ENCODE measurements at regions of chr11 and their contacts with region 1.

Region 1: DNA sequence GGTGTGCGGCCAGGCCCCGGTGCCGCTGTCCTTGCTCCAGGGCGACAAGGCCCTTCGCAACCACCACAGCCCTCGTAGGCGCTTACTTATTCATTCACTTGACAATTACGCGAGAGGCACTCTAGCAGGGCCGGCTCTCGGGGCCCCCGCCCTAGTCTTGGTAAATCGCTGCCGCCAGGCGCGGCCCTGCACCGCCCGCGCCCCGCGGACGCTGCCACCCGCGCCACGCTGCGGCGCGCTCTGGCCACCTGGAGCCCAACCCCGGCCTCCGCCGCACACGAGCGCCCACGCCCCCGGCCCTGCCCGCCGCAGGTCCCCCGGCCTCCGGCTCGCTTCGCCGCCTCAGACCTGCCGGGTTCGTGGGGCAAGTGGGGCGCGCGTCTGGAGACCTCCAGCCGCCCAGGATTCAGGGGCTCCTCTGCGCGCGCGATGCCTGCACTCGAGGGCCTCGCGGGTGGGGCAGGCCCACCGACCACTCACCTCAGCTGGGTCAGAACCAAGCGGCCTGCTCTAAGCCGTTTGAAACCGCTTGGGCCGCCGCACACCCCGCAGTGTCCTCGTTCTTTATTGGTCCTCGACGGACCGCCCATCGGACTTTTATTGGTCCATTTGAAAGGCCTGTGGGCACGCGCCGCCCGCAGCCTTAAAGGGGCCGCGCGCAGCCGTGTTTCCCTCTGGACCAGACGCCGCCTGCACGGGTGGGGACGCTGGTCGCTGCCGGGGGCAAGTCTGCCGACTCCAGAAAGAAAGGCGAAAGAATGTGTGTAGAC is at the start of gene CKAP5:
- DNase-seq: peak; percentile 84 to 89
- ATAC-seq: peak; percentile 98 to 99
- H3K4me3 ChIP-seq: peak within 1 kb of the TSS; percentile 74 to 95 (median 90)
- H3K27ac ChIP-seq: peak within 1 kb of the TSS; percentile 80 to 94 (median 92)
- H3K4me1 ChIP-seq: peaks cover 15 to 21% of the 10 kb centered on the region in 2 donors
- H3K27me3 ChIP-seq: no peaks in the 10 kb centered on the region
- CTCF ChIP-seq: peak in 1 of 5 experiments; percentile 24
- POLR2A ChIP-seq: peak; percentile 87 to 89
- total RNA-seq, gene CKAP5: 43.6 to 89.6 (median 65.0) TPM

Region 2: DNA sequence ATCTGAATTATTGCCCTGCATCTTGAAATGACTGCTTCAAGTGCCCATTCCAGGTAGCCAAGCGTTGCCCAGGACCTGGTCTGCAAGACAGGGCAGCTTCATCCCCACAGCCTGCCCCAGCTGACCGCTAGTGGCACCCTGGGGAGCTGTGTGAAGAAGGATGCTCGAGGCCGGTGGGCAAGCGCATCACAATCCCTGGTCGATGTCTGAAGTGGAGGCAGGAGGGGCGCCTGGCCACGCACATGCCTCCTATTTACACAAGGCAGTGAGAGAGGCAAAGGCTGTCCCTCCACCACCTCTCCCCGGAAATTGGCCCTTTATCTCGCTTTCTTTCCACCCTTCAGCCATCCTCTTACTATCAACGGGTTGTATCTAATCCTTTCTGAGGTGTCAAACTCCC is 696.6 kb before region 1 on chr11:
- in situ Hi-C with region 1: no loop called
- intact Hi-C with region 1: no loop called
- DNase-seq: no peak
- ATAC-seq: no peak
- H3K4me3 ChIP-seq: no peak overlapping the region
- H3K27ac ChIP-seq: no peak overlapping the region
- H3K4me1 ChIP-seq: no peaks in the 10 kb centered on the region
- H3K27me3 ChIP-seq: no peaks in the 10 kb centered on the region
- CTCF ChIP-seq: no peak
- POLR2A ChIP-seq: no peak

Region 3: GRCh38 chr11:46778416-46778815 is 67.5 kb before region 1 on chr11:
- in situ Hi-C with region 1: no loop called
- intact Hi-C with region 1: no loop called
- DNase-seq: no peak
- ATAC-seq: no peak
- H3K4me3 ChIP-seq: no peak overlapping the region
- H3K27ac ChIP-seq: no peak overlapping the region
- H3K4me1 ChIP-seq: no peaks in the 10 kb centered on the region
- H3K27me3 ChIP-seq: no peaks in the 10 kb centered on the region
- CTCF ChIP-seq: no peak
- POLR2A ChIP-seq: no peak

Region 4: GRCh38 chr11:46826310-46827044 is 19.4 kb before region 1 on chr11:
- in situ Hi-C with region 1: no loop called
- intact Hi-C with region 1: loop called (anchors 1 kb)
- DNase-seq: peak; percentile 77 to 85
- ATAC-seq: peak; percentile 92
- H3K4me3 ChIP-seq: peak overlapping the region; percentile 65 to 86 (median 76)
- H3K27ac ChIP-seq: peak overlapping the region; percentile 86 to 95 (median 90)
- H3K4me1 ChIP-seq: peaks cover 44 to 53% of the 10 kb centered on the region in 2 donors
- H3K27me3 ChIP-seq: no peaks in the 10 kb centered on the region
- CTCF ChIP-seq: peak in 2 of 5 experiments; percentile 39
- POLR2A ChIP-seq: peak; percentile 41 to 71